ENCODE measurements at regions of chr12 and their contacts with region 1.

Region 1: DNA sequence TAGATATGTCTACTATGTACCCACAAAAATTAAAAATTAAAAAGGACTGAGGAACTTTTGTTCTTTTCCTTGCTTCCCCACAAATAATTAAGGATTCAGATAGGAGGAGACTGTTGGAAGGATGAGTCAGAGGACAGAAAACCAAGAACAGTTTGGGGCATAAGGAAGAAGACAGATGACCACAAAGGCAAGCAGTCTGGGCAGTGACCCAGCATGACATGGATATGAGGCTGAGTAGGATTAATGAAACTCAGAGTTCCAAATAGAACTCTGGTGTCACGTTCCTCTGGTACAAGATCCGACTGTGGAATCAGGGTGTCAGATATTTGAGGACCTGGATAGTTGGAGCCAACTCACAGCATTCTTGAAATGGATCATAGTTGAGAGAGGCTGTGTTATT is 89.3 kb upstream of the SLC38A4 start:
- DNase-seq: no peak
- H3K4me3 ChIP-seq: no peak overlapping the region
- H3K27ac ChIP-seq: no peak overlapping the region
- H3K4me1 ChIP-seq: no peaks in the 10 kb centered on the region
- H3K27me3 ChIP-seq: no peaks in the 10 kb centered on the region
- CTCF ChIP-seq: no peak
- POLR2A ChIP-seq: no peak

Region 2: DNA sequence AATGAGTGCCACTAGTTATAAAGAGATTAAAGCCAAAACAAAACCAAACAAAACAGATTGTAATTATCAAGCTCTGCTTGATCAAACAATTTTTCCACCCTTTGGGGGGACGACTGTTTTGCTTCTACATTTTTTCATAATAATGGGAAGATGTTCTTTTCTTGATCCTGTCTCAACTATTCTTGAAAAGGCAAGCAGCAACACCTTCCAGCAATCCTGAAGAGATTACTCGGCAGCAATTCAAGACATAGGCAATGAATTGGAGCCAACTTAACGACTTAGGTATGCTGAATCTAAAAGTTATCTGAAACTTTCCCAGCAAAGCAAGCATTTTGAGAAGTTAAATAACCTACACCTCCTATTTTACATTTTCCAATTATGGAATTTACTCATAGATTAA is 19.4 kb before region 1 on chr12:
- intact Hi-C with region 1: loop called (anchors 1 kb)
- DNase-seq: no peak
- H3K4me3 ChIP-seq: no peak overlapping the region
- H3K27ac ChIP-seq: no peak overlapping the region
- H3K4me1 ChIP-seq: no peaks in the 10 kb centered on the region
- H3K27me3 ChIP-seq: peaks cover 0 to 8% (median 0%) of the 10 kb centered on the region in 7 donors
- CTCF ChIP-seq: no peak
- POLR2A ChIP-seq: no peak

Region 3: GRCh38 chr12:47021298-47021697 is 106.2 kb after region 1 on chr12:
- intact Hi-C with region 1: no loop called
- DNase-seq: no peak
- H3K4me3 ChIP-seq: no peak overlapping the region
- H3K27ac ChIP-seq: no peak overlapping the region
- H3K4me1 ChIP-seq: no peaks in the 10 kb centered on the region
- H3K27me3 ChIP-seq: no peaks in the 10 kb centered on the region
- CTCF ChIP-seq: peak; percentile 39 to 71 (median 63)
- POLR2A ChIP-seq: no peak

Measured in spleen (tissue), 13 donors.